IMR-90 (cell line): ENCODE measurements at regions of chr19 and their contacts with region 1.

Region 1: DNA sequence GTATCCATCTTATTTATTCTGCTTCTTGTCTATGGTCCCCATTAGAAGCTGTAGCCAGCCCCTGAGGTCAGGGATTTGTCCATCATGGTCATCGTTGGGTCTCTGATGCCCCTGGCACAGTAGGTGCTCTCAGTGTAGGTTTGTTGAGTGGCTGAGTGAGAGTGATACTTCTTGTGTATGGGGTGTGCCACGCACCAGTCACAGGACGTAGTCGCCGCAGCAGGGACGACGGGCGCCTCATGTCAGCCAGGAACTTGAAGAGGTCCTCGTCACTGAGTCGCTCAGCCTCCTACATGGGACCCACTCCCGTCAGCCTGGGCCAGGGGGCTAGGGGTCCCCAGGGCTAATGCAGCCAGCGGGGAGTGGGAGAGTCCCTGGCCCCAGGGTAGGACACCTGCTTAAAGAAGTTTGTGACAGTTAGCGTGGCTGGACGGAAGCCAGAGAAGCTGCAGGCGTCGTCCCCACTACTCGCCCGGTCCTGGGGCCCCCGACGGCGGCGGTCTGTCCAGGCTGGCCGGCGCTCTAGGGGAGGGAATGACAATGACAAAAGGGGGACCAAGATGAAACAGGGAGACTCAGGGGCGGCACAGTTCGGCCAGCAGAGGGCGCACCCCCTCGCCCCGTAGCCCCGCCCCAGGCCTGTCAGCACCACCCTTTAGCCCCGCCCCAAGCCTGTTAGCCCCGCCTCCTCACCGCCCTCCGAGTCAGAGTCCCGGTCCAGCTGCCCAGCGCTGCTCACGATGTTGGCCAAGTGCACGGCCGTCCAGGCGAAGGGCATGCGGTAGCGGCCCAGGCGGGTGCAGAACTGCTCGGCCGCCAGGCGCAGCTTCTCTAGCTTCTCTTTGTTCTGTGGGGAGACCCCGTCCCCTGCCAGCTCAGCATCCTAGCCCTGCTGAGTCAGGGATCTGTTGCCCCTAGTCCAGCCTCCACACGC is 3.7 kb downstream of the ANGPTL8 start:
- DNase-seq: peak; percentile 77
- ATAC-seq: peak; percentile 100
- H3K4me3 ChIP-seq: no peak overlapping the region
- H3K27ac ChIP-seq: no peak overlapping the region
- H3K4me1 ChIP-seq: 0 out of 2 replicates have a peak, but pooled peaks cover 1% of the 10 kb centered on the region
- H3K27me3 ChIP-seq: no peaks in the 10 kb centered on the region
- CTCF ChIP-seq: peak; percentile 54
- POLR2A ChIP-seq: no peak
- RAD21 ChIP-seq: peak; percentile 31

Region 2: DNA sequence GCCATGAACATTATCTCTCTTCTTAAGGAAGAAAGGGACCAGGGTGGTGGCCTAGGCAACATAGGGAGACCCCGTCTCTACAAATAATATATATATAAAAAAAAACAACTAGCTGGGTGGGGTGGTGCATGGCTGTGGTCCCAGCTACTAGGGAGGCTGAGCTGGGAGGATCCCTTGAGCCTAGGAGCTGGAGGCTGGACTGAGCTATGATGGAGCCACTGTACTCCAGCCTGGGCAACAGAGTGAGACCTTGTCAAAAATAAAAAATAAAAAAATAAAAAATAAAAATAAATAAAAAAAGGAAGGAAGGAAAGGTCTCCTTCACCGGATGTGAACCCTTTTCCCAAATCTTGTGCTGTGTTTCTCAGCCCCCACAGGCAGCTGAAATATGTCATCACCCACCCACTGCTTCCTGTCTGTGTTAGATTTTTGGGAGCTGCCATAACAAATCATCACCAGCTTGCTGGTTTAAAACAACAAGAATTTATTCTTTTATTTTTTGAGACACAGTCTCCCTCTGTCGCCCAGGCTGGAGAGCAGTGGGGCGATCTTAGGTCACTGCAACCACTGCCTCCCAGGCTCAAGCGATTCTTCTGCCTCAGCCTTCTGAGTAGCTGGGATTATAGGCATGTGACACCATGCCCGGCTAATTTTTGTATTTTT is 43.3 kb after region 1 on chr19:
- CTCF ChIA-PET with region 1: interaction called, 4 read pairs
- POLR2A ChIA-PET with region 1: no interaction called
- dilution Hi-C with region 1: no loop called
- in situ Hi-C with region 1: no loop called
- intact Hi-C with region 1: loop called (anchors 1 kb)
- DNase-seq: peak; percentile 58
- ATAC-seq: peak; percentile 82
- H3K4me3 ChIP-seq: no peak overlapping the region
- H3K27ac ChIP-seq: no peak overlapping the region; the same call in 1 of the 2 replicates
- H3K4me1 ChIP-seq: no peaks in the 10 kb centered on the region
- H3K27me3 ChIP-seq: no peaks in the 10 kb centered on the region
- CTCF ChIP-seq: no peak
- POLR2A ChIP-seq: no peak
- RAD21 ChIP-seq: 0 out of 2 replicates have a peak, but pooled peaks have one; percentile 13

Region 3: DNA sequence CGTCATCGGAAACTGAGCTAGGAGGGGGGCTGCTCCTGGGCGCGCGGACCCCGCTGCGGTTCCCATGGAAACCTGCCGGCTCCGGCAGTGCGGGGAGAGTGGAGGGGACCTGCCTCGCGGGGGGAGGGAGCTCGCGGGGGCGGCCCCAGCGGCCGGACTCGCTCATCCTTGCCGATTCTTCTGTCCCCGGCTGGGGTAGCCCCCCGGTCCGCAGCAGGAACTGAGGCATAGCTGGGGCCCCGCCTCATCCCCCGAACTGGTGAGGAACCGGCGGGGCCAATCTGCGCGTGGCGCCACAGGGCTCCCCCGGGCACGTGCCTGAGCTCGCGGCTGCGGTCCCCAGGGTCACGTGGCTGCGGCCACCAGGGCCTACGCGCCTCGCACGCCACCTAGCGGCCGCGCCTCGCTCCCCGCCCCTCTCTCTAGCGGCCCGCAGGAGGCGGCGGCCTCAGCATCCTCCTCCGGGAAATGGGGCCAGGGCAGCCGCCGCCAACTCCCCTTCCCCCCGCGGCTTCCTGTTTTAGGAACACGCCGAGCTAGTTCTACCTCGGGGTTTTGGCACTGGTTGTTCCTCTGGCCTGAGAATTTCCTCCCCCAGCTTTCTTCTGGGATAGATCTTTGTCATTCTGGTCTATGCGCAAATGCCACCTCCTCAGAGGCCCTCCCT is 239.4 kb after region 1 on chr19:
- CTCF ChIA-PET with region 1: interaction called, 3 read pairs
- POLR2A ChIA-PET with region 1: no interaction called
- dilution Hi-C with region 1: no loop called
- in situ Hi-C with region 1: no loop called
- intact Hi-C with region 1: loop called (anchors 1 kb)
- DNase-seq: peak; percentile 72
- ATAC-seq: peak; percentile 83
- H3K4me3 ChIP-seq: peak overlapping the region; percentile 49
- H3K27ac ChIP-seq: no peak overlapping the region
- H3K4me1 ChIP-seq: peaks cover 2% of the 10 kb centered on the region; the same call in 1 of the 2 replicates
- H3K27me3 ChIP-seq: peaks cover 42% of the 10 kb centered on the region
- CTCF ChIP-seq: peak; percentile 97
- POLR2A ChIP-seq: no peak
- RAD21 ChIP-seq: peak; percentile 81